Naive thymus-derived CD4-positive, alpha-beta T cell (primary cell): ENCODE measurements at regions of chr19 and their contacts with region 1.

Region 1: DNA sequence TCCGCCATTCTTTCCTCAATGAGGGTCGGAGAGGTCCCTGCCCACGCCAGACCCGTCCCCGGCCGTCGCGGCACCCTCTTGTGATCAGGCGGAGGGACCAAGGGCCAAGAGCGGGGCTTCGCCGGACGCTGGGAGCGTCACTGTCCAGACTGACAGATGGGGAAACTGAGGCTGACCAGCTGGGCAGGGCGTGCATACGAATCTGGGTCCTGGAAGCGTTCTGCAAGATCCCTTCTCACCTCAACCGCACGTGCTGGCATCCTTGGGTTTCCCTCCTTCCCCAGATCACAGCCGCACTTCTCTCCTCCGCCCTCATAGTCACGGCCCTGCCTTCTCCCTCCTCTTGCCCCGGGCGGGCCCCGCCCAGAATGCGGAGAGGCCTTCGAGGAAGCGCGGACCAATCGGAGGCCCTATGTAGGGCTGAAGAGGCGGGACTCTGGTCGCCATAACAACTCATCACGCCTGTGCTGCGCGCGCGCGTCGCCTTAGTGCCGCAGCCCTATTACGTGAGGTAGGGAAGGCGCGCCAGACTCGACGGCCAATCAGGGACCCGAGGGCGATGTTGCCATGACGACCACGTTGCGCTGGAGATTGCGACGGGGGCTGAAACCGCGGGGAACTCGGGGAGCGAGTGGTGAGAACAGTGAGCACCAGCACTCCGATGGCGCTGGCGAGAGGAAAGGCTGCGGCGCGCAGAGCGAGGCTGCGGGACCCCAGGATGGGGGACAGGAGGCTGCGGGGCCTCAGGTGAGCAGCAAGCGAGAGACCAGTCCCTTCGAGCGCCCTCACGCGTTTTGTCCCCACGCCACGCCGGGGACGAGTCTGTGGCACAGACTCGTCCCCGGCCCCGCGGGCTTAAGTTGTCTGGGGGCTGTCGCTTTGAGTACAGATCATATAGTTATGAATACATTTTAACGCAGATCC is 5.7 kb downstream of the RNF225 start:
- DNase-seq: peak; percentile 96 to 100 (median 98)
- ATAC-seq: peak; percentile 97
- H3K4me3 ChIP-seq: peak overlapping the region; percentile 77
- H3K4me3 Mint-ChIP-seq: peak overlapping the region; percentile 86 to 98 (median 94)
- H3K27ac ChIP-seq: peak overlapping the region; percentile 91
- H3K27ac Mint-ChIP-seq: peak overlapping the region; percentile 88 to 97 (median 94)
- H3K4me1 ChIP-seq: peaks cover 6 to 13% of the 10 kb centered on the region in 2 donors
- H3K4me1 Mint-ChIP-seq: peaks cover 6 to 19% (median 8%) of the 10 kb centered on the region in 7 donors
- H3K27me3 ChIP-seq: peaks cover 0 to 3% of the 10 kb centered on the region in 2 donors
- H3K27me3 Mint-ChIP-seq: peaks cover 5 to 20% (median 7%) of the 10 kb centered on the region in 5 donors

Region 2: DNA sequence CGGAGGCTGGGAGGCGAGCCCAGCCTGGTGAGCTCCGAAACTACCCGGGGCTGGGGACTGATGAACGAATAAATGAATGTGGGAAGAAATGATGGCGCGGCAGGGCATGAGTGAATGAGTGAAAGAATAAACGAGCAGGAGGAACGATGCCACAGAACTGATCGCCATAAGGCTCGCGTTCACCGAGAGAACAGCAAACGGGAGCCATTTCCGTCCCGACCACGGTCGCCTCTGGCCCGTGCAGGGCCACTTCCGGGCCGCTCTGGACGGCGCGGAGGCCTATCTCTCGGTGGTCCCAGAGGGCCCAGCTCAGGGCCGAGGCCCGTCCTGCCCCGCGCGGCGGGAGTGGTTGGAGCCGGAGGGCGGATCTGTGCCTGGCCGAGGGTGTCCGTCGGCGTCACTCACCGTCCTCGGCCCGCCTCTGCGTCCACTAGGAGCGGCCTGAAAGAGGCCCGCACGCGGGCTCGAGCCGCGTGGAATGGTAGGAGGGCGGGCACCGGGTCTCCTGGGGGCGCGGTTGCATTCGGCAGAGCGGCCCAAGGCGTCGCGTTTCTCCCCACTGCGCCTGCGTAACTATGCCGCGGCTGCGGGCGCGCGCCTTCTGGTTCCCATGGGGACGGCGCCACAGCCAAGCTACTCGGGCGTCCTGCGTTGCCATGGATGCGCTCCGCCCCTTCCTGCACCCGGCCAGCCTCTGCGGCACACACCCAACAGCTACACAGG is 38.7 kb before region 1 on chr19 and contains the start of gene ZNF497:
- CTCF ChIA-PET with region 1: no interaction called
- POLR2A ChIA-PET with region 1: interaction called, 3 read pairs
- intact Hi-C with region 1: loop called (anchors 1 kb)
- DNase-seq: peak; percentile 91 to 96 (median 95)
- ATAC-seq: peak; percentile 92
- H3K4me3 ChIP-seq: peak within 1 kb of the TSS; percentile 99
- H3K4me3 Mint-ChIP-seq: peak within 1 kb of the TSS; percentile 89 to 99 (median 95)
- H3K27ac ChIP-seq: peak within 1 kb of the TSS; percentile 78
- H3K27ac Mint-ChIP-seq: peak within 1 kb of the TSS; percentile 71 to 96 (median 90)
- H3K4me1 ChIP-seq: peaks cover 5 to 7% of the 10 kb centered on the region in 2 donors
- H3K4me1 Mint-ChIP-seq: peaks cover 7 to 21% (median 11%) of the 10 kb centered on the region in 7 donors
- H3K27me3 ChIP-seq: no peaks in the 10 kb centered on the region
- H3K27me3 Mint-ChIP-seq: peaks cover 0 to 5% (median 0%) of the 10 kb centered on the region in 5 donors
- total RNA-seq, gene ZNF497: 1.0 to 2.7 (median 1.8) TPM

Region 3: GRCh38 chr19:58466760-58467589 is 65.8 kb after region 1 on chr19 and contains the start of gene ZNF324:
- CTCF ChIA-PET with region 1: no interaction called
- POLR2A ChIA-PET with region 1: no interaction called
- intact Hi-C with region 1: loop called in 1 of 2 experiments (anchors 1 kb)
- DNase-seq: peak; percentile 92 to 97 (median 95)
- ATAC-seq: peak; percentile 98
- H3K4me3 ChIP-seq: peak within 1 kb of the TSS; percentile 92
- H3K4me3 Mint-ChIP-seq: peak within 1 kb of the TSS; percentile 80 to 89 (median 86)
- H3K27ac ChIP-seq: peak within 1 kb of the TSS; percentile 99
- H3K27ac Mint-ChIP-seq: peak within 1 kb of the TSS in 8 of 9 donors; percentile 67 to 91 (median 85)
- H3K4me1 ChIP-seq: peaks cover 7 to 11% of the 10 kb centered on the region in 2 donors
- H3K4me1 Mint-ChIP-seq: peaks cover 14 to 27% (median 22%) of the 10 kb centered on the region in 7 donors
- H3K27me3 ChIP-seq: no peaks in the 10 kb centered on the region
- H3K27me3 Mint-ChIP-seq: peaks cover 0 to 3% (median 0%) of the 10 kb centered on the region in 5 donors
- total RNA-seq, gene ZNF324: 14.2 to 28.0 (median 23.4) TPM

Region 4: DNA sequence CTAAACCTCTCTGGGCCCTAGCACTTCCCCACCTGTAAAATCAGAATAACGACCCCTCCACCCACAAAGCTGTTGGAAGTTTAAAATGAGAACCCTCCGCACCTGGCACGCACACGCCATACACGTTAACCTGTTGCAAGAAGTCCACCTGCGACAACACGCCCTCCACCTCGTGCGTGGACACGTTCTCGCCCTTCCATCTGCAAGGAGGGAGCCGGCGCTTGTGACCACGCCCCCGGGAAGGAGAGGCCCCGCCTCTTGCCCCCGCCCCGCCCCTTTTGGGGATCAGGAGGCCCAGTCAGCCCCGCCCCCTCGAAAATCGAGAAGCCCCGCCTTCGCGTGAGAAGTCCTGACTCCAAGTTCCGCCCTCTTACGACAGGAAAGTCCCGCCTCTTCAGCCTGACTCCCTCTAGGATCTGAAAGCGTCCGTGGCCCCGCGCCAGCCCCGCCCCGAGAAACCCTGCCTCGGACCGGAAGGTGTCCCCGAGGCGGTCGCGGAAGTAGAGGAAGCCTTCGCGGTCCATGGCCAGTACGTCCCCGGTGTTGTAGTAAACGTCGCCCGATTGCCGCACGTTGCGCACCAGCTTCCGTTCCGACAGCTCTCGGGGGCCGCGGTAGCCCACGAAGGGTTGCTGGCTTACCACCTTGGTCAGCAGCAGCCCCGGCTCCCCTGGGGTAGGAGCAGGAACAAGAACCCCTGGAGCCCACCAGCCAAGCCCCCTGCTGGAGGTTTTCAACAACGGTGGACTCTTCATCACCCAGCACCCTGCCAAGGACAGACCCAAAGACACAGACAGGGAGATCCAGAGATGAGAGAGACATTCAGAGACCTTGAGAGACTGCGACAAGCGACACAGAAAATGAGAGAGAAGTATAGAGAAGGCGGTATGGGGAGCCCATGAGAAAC is 98.1 kb after region 1 on chr19:
- CTCF ChIA-PET with region 1: no interaction called
- POLR2A ChIA-PET with region 1: no interaction called
- intact Hi-C with region 1: loop called in 1 of 2 experiments (anchors 1 kb)
- DNase-seq: peak; percentile 76 to 96 (median 87)
- ATAC-seq: peak; percentile 93
- H3K4me3 ChIP-seq: peak overlapping the region; percentile 66
- H3K4me3 Mint-ChIP-seq: peak overlapping the region; percentile 88 to 98 (median 94)
- H3K27ac ChIP-seq: peak overlapping the region; percentile 72
- H3K27ac Mint-ChIP-seq: peak overlapping the region; percentile 90 to 97 (median 95)
- H3K4me1 ChIP-seq: peaks cover 12 to 15% of the 10 kb centered on the region in 2 donors
- H3K4me1 Mint-ChIP-seq: peaks cover 8 to 32% (median 21%) of the 10 kb centered on the region in 7 donors
- H3K27me3 ChIP-seq: no peaks in the 10 kb centered on the region
- H3K27me3 Mint-ChIP-seq: no peaks in the 10 kb centered on the region

Region 5: GRCh38 chr19:58558623-58559274 is 157.6 kb after region 1 on chr19:
- CTCF ChIA-PET with region 1: no interaction called
- POLR2A ChIA-PET with region 1: no interaction called
- intact Hi-C with region 1: loop called in 1 of 2 experiments (anchors 1 kb)
- DNase-seq: peak; percentile 99 to 100 (median 100)
- ATAC-seq: peak; percentile 79
- H3K4me3 ChIP-seq: peak overlapping the region; percentile 97
- H3K4me3 Mint-ChIP-seq: peak overlapping the region; percentile 87 to 98 (median 96)
- H3K27ac ChIP-seq: peak overlapping the region; percentile 97
- H3K27ac Mint-ChIP-seq: peak overlapping the region; percentile 93 to 99 (median 98)
- H3K4me1 ChIP-seq: peaks cover 51 to 63% of the 10 kb centered on the region in 2 donors
- H3K4me1 Mint-ChIP-seq: peaks cover 18 to 86% (median 77%) of the 10 kb centered on the region in 7 donors
- H3K27me3 ChIP-seq: no peaks in the 10 kb centered on the region
- H3K27me3 Mint-ChIP-seq: peaks cover 0 to 4% (median 0%) of the 10 kb centered on the region in 5 donors